GM12878 (cell line): ENCODE measurements at regions of chr3 and their contacts with region 1.

Region 1: GRCh38 chr3:139389458-139390209 is at the start of gene COPB2:
- DNase-seq: peak; percentile 93
- ATAC-seq: peak; percentile 97
- H3K4me3 ChIP-seq: peak within 1 kb of the TSS; percentile 94
- H3K27ac ChIP-seq: peak within 1 kb of the TSS; percentile 89
- H3K4me1 ChIP-seq: peaks cover 4% of the 10 kb centered on the region; the same call in 1 of the 2 replicates
- H3K27me3 ChIP-seq: no peaks in the 10 kb centered on the region
- CTCF ChIP-seq: no peak
- EP300 ChIP-seq: peak in 1 of 2 experiments; percentile 37; a peak in 1 of 4 replicates
- POLR2A ChIP-seq: peak; percentile 93
- RAD21 ChIP-seq: no peak
- polyA plus RNA-seq, gene COPB2: 51.3 to 79.8 TPM

Region 2: GRCh38 chr3:139353920-139354556 is 35.6 kb before region 1 on chr3:
- CTCF ChIA-PET with region 1: interaction called, 4 read pairs
- POLR2A ChIA-PET with region 1: interaction called, 4 read pairs
- RAD21 ChIA-PET with region 1: interaction called, 3 read pairs
- SMC1A ChIA-PET with region 1: no interaction called
- in situ Hi-C with region 1: no loop called
- intact Hi-C with region 1: loop called (anchors 5 kb)
- DNase-seq: no peak
- ATAC-seq: peak; percentile 52
- H3K4me3 ChIP-seq: no peak overlapping the region
- H3K27ac ChIP-seq: no peak overlapping the region
- H3K4me1 ChIP-seq: peaks cover 9% of the 10 kb centered on the region
- H3K27me3 ChIP-seq: no peaks in the 10 kb centered on the region
- CTCF ChIP-seq: peak; percentile 50 to 57 (median 50); a peak in 5 of 6 replicates
- EP300 ChIP-seq: no peak
- POLR2A ChIP-seq: no peak
- RAD21 ChIP-seq: no peak

Region 3: GRCh38 chr3:139378587-139379241 is 10.9 kb before region 1 on chr3:
- CTCF ChIA-PET with region 1: no interaction called
- POLR2A ChIA-PET with region 1: interaction called, 6 read pairs
- RAD21 ChIA-PET with region 1: interaction called, 3 read pairs
- SMC1A ChIA-PET with region 1: interaction called, 10 read pairs
- in situ Hi-C with region 1: no loop called
- intact Hi-C with region 1: no loop called
- DNase-seq: no peak
- ATAC-seq: no peak
- H3K4me3 ChIP-seq: no peak overlapping the region
- H3K27ac ChIP-seq: no peak overlapping the region
- H3K4me1 ChIP-seq: no peaks in the 10 kb centered on the region; the same call in 1 of the 2 replicates
- H3K27me3 ChIP-seq: no peaks in the 10 kb centered on the region
- CTCF ChIP-seq: no peak
- EP300 ChIP-seq: no peak
- POLR2A ChIP-seq: no peak
- RAD21 ChIP-seq: no peak